Calu3 (cell line): ENCODE measurements at regions of chr21 and their contacts with region 1.

Region 1: DNA sequence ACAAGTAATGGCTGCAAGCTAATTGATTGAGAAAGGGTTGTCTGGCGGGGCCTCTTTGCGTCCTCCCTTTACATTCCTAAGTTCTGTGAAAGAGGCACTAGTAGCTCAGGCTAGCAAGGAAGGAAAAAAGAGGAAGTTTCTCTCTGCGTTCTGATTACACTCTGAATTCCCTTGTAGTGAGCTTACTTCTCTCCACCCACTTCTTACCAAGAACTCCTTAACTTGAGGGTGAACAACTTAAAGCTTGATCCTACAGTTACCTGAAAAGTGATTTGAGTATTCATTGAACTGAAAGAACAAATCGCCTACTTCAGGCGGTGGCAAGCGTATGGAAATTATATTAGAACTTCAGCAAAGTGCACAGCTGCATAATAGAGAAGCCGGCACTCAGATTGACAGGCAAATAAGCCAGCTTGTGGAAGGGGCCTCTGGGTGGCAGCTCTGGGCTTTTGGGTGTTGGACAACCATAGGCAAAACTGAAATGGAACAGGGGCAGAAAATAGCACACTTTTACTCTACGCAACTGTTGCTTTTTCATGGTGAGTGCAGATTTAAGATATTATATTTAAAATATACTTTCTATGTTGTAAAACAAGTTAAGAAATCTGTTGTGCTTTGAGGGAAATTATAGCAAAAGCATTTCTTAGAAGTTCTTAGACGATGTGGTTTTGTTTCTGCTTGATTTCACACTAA is 464.5 kb downstream of the USP25 start:
- DNase-seq: peak; percentile 21
- H3K4me3 Mint-ChIP-seq: no peak overlapping the region
- H3K27ac Mint-ChIP-seq: no peak overlapping the region
- H3K4me1 Mint-ChIP-seq: no peaks in the 10 kb centered on the region
- H3K27me3 Mint-ChIP-seq: no peaks in the 10 kb centered on the region
- CTCF ChIP-seq: no peak

Region 2: GRCh38 chr21:16082038-16082816 is 112.0 kb before region 1 on chr21:
- CTCF ChIA-PET with region 1: no interaction called
- intact Hi-C with region 1: loop called (anchors 10 kb)
- DNase-seq: no peak
- H3K4me3 Mint-ChIP-seq: no peak overlapping the region
- H3K27ac Mint-ChIP-seq: no peak overlapping the region
- H3K4me1 Mint-ChIP-seq: peaks cover 16% of the 10 kb centered on the region
- H3K27me3 Mint-ChIP-seq: no peaks in the 10 kb centered on the region
- CTCF ChIP-seq: no peak